ENCODE measurements at regions of chr3 and their contacts with region 1.

Region 1: DNA sequence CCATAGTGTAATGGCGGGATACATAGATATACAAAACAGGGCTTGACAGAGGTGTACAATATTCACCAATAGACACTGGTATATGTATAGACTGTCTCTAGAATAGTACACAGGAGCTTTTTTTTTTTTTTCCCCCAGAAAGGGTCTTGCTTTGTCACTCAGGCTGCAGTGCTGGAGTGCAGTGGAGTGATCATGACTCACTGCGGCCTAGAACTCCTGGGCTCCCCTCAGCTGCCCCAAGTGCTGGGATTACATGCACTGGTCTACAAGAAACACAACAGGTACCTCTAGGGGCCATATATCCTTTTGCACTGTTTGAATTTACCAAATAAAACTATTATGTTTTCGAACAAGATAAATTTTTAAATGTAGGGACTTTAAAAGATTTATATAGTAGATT is 12.3 kb downstream of the RHOA start:
- DNase-seq: no peak
- ATAC-seq: no peak

Region 2: DNA sequence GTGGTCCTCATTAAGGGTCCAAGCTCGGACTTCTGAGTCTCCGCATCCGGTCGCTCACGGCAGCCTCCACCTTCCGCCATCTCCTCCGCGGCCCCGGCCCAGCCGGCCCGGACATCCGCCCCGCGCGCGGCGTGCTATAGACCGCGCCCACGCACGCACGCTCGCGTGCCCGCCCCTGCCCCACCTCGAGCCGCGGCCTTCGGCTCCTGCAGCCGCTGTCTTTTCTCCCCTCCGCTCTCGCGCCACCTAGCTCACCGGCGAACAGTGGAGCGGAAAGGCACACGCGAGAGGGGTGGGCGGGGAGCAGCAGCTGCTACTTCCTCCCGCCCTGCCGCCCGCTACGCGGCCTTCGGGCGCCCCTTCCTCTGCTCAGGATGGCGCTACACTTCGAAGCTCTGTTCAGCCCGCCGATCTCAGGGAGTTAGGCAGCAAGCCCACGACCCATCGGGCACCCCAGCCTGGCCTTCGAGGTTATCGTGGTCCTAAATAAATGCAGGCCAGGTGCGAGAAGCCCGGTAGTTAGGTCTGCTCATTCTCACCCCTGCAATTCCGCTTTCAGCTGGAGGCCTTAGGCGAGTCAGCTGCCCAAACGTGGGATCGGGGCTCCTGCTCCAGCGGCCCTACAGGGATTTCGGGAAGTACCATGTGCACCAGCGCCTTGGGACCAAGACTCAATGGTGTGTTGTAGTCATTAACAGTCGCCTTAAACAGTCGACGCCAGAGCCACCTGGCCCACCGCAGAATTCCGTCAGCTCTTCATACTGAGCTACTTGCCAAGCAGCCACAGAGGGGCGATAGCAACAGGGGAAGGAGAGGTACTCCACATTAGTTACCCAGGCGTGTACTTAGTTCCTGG is 59.3 kb before region 1 on chr3 and contains the start of gene USP4:
- intact Hi-C with region 1: loop called (anchors 2 kb)
- DNase-seq: peak; percentile 93
- ATAC-seq: peak; percentile 96
- total RNA-seq, gene USP4: 83.2 TPM

Region 3: GRCh38 chr3:49539659-49540560 is 140.4 kb after region 1 on chr3:
- intact Hi-C with region 1: no loop called
- DNase-seq: peak; percentile 98
- ATAC-seq: peak; percentile 98